Thyroid gland (tissue), 4 donors: ENCODE measurements at regions of chr18 and their contacts with region 1.

Region 1: DNA sequence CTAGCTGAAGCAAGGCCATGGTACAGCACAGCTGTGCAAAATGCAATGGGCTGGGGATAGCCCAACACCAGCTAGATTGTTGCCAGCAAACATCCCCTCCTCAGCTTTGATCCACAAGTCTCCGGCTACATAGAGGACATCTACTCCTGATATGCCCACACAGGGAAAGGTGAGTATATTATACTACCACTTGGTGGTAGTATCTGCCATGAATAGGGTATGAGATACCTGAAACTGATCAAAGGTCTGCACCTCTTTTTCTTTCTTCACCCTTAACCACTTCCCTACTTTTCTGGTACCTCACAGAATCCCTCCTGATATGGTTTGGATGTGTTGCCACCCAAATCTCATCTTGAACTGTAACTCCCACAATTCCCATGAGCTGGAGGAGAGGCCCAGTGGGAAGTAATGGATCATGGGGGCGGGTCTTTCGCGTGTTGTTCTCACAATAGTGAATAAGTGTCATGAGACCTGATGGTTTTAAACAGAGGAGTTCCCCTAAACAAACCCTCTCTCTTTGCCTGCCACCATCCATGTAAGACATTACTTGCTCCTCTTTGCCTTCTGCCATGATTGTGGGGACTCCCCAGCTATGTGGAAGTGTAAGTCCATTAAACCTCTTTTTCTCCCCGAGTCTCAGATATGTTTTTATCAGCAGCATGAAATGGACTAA is 279.6 kb downstream of the TXNL1 start:
- DNase-seq: no peak
- H3K4me3 ChIP-seq: no peak overlapping the region
- H3K27ac ChIP-seq: no peak overlapping the region
- H3K4me1 ChIP-seq: no peaks in the 10 kb centered on the region
- H3K27me3 ChIP-seq: no peaks in the 10 kb centered on the region
- CTCF ChIP-seq: peak in 4 of 6 experiments; percentile 31 to 57 (median 42)
- POLR2A ChIP-seq: no peak

Region 2: GRCh38 chr18:56248610-56249235 is 110.0 kb before region 1 on chr18:
- intact Hi-C with region 1: no loop called
- DNase-seq: no peak
- H3K4me3 ChIP-seq: no peak overlapping the region
- H3K27ac ChIP-seq: no peak overlapping the region
- H3K4me1 ChIP-seq: peaks cover 4 to 11% of the 10 kb centered on the region in 2 donors
- H3K27me3 ChIP-seq: no peaks in the 10 kb centered on the region
- CTCF ChIP-seq: no peak
- POLR2A ChIP-seq: no peak

Region 3: DNA sequence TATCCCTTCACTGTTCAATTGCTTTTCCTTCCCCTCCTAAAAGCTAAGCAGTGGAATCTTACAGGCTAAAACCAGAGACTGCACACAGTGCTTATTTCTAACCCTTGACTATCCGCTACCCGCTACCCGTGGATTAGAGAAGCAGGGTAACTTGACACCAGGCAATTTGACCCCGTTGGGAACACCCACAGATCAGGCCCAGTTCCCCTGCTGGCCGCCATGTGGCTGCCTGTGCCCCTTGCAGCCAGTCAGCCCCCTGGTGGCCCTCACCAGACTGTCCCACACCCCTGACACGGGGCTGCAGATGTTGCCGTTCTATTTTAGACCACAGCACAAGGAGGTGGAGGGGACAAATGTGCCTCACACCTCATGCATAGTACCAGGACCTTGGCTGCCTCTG is 204.8 kb after region 1 on chr18:
- intact Hi-C with region 1: loop called (anchors 10 kb)
- DNase-seq: no peak
- H3K4me3 ChIP-seq: no peak overlapping the region
- H3K27ac ChIP-seq: no peak overlapping the region
- H3K4me1 ChIP-seq: peaks cover 20 to 21% of the 10 kb centered on the region in 2 donors
- H3K27me3 ChIP-seq: no peaks in the 10 kb centered on the region
- CTCF ChIP-seq: no peak
- POLR2A ChIP-seq: no peak